Psoas muscle (tissue), 8 donors: ENCODE measurements at regions of chr1 and their contacts with region 1.

Region 1: GRCh38 chr1:155961937-155962336 is 16.4 kb downstream of the ARHGEF2 start:
- DNase-seq: peak; percentile 82 to 83
- ATAC-seq: peak; percentile 80 to 87 (median 82)
- H3K4me3 ChIP-seq: peak overlapping the region; percentile 28
- H3K27ac ChIP-seq: peak overlapping the region; percentile 71
- H3K4me1 ChIP-seq: peaks cover 34% of the 10 kb centered on the region
- H3K27me3 ChIP-seq: no peaks in the 10 kb centered on the region
- CTCF ChIP-seq: peak; percentile 5

Region 2: DNA sequence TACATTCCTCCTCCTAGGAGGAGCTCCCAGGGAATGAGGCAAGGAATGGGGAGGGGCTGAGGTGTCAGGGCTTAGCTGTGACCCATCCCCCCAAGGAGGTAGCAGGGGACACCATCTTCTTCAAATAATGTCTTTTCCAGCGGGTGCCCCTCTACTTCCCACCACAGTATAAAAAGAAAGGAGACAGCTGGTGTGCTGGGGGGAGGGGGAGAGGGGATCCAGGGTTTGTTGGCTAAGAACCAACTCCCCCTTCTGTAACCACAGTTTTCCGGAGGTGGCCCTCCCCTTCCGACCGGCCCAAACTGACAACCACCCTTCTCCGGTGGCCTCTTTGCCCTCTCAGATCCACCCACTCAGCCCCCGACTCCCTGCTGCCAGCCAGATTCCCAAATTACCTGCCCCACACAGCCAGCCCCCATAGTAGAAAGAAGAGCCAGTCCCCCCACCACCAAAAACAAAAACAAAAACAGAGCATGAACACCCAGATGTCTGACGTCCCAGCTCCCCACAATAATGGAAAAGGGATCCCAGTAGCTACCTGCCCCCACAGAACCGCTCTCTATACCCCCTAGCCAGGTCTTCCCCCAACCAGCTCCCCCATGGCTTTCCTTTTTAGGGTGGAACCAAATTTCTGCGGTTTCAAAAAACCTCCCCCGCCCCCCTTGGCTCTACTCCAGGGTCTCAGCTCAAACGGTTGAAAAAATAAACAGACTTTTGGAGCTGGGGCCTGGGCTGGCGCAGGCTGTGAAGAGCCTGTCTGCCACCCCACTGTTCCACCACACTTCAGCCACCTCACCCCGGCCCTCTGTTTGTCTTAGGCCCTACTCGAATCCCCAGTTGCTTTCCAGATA is 14.3 kb after region 1 on chr1:
- intact Hi-C with region 1: loop called in 1 of 2 experiments (anchors 2 kb)
- DNase-seq: peak; percentile 72 to 82
- ATAC-seq: no peak
- H3K4me3 ChIP-seq: peak overlapping the region; percentile 88
- H3K27ac ChIP-seq: peak overlapping the region; percentile 89
- H3K4me1 ChIP-seq: peaks cover 73% of the 10 kb centered on the region
- H3K27me3 ChIP-seq: no peaks in the 10 kb centered on the region
- CTCF ChIP-seq: no peak

Region 3: GRCh38 chr1:156012051-156012817 is 50.3 kb after region 1 on chr1:
- intact Hi-C with region 1: no loop called
- DNase-seq: no peak
- ATAC-seq: no peak
- H3K4me3 ChIP-seq: no peak overlapping the region
- H3K27ac ChIP-seq: no peak overlapping the region
- H3K4me1 ChIP-seq: peaks cover 5% of the 10 kb centered on the region
- H3K27me3 ChIP-seq: no peaks in the 10 kb centered on the region
- CTCF ChIP-seq: no peak

Region 4: DNA sequence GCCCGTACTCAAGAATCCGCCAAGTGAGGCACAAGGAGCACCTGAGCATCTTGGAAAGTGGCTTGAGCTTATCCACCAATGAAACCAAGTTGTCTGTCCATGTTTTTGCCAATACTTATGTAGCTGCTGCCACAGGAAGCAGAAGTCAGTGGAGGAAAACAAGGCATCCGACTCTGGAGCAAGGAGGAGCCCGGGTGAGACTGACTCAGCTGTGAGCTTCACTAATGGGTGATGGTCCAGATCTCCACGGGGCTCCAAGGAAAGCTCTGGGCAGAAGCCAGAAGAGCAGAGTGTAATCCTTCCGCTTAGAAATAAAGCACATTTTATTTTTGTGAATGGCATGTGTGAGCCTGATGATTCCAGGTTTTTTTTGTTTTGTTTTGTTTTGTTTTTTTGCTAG is 71.1 kb after region 1 on chr1:
- intact Hi-C with region 1: no loop called
- DNase-seq: no peak
- ATAC-seq: no peak
- H3K4me3 ChIP-seq: no peak overlapping the region
- H3K27ac ChIP-seq: no peak overlapping the region
- H3K4me1 ChIP-seq: no peaks in the 10 kb centered on the region
- H3K27me3 ChIP-seq: no peaks in the 10 kb centered on the region
- CTCF ChIP-seq: no peak